Panc1 (cell line): ENCODE measurements at regions of chr6 and their contacts with region 1.

Region 1: GRCh38 chr6:146650834-146651472 is 52.2 kb downstream of the ADGB start:
- DNase-seq: no peak
- ATAC-seq: peak; percentile 34; the same call in 1 of the 2 replicates
- H3K4me3 ChIP-seq: no peak overlapping the region
- H3K27ac ChIP-seq: no peak overlapping the region
- H3K4me1 ChIP-seq: no peaks in the 10 kb centered on the region
- H3K27me3 ChIP-seq: no peaks in the 10 kb centered on the region
- CTCF ChIP-seq: no peak

Region 2: GRCh38 chr6:146515212-146515611 is 135.7 kb before region 1 on chr6:
- CTCF ChIA-PET with region 1: no interaction called
- POLR2A ChIA-PET with region 1: interaction called, 13 read pairs
- in situ Hi-C with region 1: no loop called
- intact Hi-C with region 1: no loop called
- DNase-seq: no peak
- ATAC-seq: no peak
- H3K4me3 ChIP-seq: no peak overlapping the region
- H3K27ac ChIP-seq: no peak overlapping the region
- H3K4me1 ChIP-seq: no peaks in the 10 kb centered on the region
- H3K27me3 ChIP-seq: no peaks in the 10 kb centered on the region; the same call in 1 of the 2 replicates
- CTCF ChIP-seq: no peak